Upper lobe of right lung (tissue), 1 donor: ENCODE measurements at regions of chr10 and their contacts with region 1.

Region 1: DNA sequence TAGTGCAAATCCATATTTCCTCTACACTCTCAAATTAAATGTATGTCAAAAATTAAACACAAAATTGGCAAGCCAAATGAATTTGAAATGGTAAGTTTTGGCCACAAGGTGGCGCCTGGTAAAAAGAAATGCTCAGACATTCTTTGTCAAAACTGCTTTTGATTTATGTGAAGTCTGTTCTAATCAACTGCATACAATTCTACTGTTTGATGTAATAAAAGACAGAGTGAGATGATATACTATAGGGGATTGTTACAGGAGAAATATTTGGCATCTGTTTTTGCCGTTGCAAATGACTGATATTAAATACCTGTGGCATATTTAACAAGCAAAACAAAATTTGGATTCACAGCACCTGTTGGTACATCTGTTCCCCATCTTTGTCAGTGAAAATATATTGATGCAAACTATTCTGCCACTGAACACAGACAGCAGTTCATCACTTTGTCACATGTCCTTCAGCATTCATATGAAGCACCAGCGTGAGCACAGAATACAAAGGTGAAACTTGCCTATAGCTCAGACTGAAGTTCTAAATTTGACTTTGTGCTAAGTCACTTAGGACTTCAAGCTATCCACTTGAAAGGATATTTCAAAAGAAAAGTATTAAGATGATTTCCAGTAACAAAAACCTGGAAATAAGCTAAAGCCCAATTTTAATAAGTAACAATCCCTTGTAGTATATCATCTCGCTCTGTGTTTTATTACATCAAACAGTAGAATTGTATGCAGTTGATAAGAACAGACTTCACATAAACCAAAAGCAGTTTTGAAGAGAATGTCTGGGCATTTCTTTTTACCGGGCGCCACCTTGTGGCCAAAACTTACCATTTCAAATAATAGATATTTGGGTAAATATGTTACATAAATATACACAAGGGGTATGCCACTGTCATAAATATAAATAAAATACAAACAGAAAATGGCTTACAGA is 10.2 kb upstream of the CH25H start:
- DNase-seq: no peak
- ATAC-seq: peak; percentile 61
- H3K4me3 ChIP-seq: no peak overlapping the region
- H3K27ac ChIP-seq: no peak overlapping the region
- H3K4me1 ChIP-seq: peaks cover 10% of the 10 kb centered on the region
- H3K27me3 ChIP-seq: no peaks in the 10 kb centered on the region
- CTCF ChIP-seq: peak; percentile 84

Region 2: GRCh38 chr10:88835096-88835909 is 382.0 kb before region 1 on chr10:
- intact Hi-C with region 1: loop called (anchors 10 kb)
- DNase-seq: peak; percentile 89
- ATAC-seq: peak; percentile 97
- H3K4me3 ChIP-seq: no peak overlapping the region
- H3K27ac ChIP-seq: no peak overlapping the region
- H3K4me1 ChIP-seq: no peaks in the 10 kb centered on the region
- H3K27me3 ChIP-seq: no peaks in the 10 kb centered on the region
- CTCF ChIP-seq: peak; percentile 89

Region 3: GRCh38 chr10:88932539-88933256 is 284.6 kb before region 1 on chr10:
- intact Hi-C with region 1: loop called (anchors 10 kb)
- DNase-seq: no peak
- ATAC-seq: peak; percentile 92
- H3K4me3 ChIP-seq: no peak overlapping the region
- H3K27ac ChIP-seq: no peak overlapping the region
- H3K4me1 ChIP-seq: peaks cover 14% of the 10 kb centered on the region
- H3K27me3 ChIP-seq: no peaks in the 10 kb centered on the region
- CTCF ChIP-seq: peak; percentile 90

Region 4: DNA sequence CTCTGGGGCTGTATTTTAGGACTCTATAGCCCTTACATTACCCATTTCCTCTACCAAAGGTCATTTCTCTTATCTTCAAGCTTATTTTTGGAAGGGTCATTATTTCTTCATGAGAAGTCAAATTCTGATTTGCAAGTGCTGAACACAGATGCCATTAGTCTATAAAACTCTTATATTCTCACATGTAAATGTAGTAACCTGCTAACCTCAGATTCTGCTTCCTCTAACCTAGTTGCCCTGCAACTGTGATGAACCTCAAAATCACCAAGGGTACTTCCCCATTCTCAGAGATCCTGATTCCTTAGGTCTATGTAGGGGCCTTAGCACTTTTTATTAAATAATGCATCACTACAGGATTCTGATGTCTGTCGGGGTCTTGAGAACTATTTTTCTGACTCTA is 220.4 kb before region 1 on chr10:
- intact Hi-C with region 1: no loop called
- DNase-seq: no peak
- ATAC-seq: peak; percentile 73
- H3K4me3 ChIP-seq: no peak overlapping the region
- H3K27ac ChIP-seq: no peak overlapping the region
- H3K4me1 ChIP-seq: peaks cover 30% of the 10 kb centered on the region
- H3K27me3 ChIP-seq: no peaks in the 10 kb centered on the region
- CTCF ChIP-seq: no peak

Region 5: GRCh38 chr10:89029785-89030437 is 187.4 kb before region 1 on chr10:
- intact Hi-C with region 1: loop called (anchors 5 kb)
- DNase-seq: peak; percentile 74
- ATAC-seq: peak; percentile 87
- H3K4me3 ChIP-seq: no peak overlapping the region
- H3K27ac ChIP-seq: no peak overlapping the region
- H3K4me1 ChIP-seq: peaks cover 39% of the 10 kb centered on the region
- H3K27me3 ChIP-seq: no peaks in the 10 kb centered on the region
- CTCF ChIP-seq: peak; percentile 93